ENCODE measurements at regions of chr9 and their contacts with region 1.

Region 1: DNA sequence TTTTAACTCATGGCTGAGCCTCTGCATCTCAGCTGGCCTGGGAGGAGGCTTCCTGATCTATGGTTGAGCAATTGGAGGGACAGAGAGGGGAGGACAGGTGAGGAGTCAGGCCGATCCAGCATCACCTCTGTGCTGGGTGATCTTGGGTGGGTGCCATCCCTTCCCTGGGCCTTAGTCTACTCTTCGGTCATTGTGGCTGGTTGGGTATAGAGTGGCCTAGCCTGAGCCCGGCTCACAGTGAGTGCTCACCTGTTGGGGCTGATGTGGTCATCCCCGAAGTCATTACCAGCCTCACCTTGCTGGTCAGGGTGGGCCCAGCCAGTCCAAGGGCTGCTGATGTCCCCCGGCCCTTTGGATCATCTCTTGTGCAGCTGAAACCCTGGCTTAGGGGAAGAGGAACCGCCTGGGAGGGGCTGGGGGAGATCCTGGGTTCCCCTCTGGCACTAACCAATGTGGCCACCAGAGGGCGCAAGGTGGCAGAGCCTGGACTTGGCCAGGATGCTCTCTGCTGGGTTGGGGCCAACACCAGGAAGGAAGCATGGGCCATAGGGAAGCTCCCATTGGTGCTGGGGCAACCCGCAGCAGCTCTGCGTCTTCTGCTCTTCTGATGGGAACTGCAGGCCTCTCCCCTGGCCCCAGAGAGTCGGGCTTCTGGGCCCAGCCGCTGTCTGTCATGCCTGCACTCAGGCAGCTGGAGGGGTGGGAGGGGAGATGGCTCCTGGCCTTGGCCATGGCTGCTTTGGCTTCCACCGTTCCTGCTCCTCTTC is 17.3 kb upstream of the ODF2 start:
- DNase-seq: peak; percentile 84 to 90
- ATAC-seq: peak; percentile 88 to 96 (median 93)
- H3K4me3 ChIP-seq: no peak overlapping the region
- H3K27ac ChIP-seq: peak overlapping the region in 4 of 10 donors; percentile 1 to 56 (median 20)
- H3K4me1 ChIP-seq: peaks cover 0 to 14% (median 8%) of the 10 kb centered on the region in 9 donors
- H3K27me3 ChIP-seq: no peaks in the 10 kb centered on the region
- CTCF ChIP-seq: peak; percentile 93 to 99 (median 96)

Region 2: DNA sequence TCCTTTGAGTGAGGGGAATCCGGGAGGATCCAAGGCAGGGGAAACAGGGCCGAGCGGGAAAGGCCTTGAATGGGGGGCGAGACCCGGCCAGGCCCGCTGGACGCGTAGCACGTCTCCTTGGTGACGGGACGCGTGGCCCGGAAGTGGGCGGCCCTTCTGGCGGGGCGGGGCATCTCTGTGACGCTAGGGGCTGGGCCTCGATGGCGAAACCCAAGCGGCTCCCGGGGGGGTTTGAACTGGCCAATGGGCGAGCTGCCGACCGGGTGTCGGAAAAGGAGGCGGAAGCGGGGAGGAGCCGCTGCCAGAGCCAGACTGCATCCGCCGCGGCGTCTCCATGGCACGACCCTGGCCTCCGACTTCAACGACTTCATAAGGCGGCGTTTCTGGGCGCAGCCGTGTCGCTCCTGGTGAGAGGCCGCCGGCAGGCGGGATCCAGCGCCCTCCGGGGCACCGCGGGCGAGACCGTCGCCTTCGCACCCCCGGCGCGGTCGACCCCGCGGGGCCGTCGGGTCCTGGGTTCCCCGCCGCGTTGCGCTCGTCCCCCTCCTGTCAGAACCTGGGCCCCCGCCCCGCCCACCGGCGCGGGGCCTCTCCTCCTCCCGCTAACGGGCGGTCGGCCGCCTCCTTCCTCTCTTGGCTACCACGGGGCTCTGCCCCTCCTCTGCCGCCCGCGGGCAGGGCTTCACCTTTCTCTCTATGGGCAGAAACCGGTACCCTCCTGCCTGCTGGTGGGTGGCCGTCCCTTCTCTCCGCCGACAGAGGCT is 17.5 kb after region 1 on chr9 and contains the start of gene ODF2:
- intact Hi-C with region 1: loop called in 2 of 10 experiments (anchors 2 kb)
- DNase-seq: peak; percentile 98 to 99
- ATAC-seq: peak; percentile 93 to 98 (median 96)
- H3K4me3 ChIP-seq: peak within 1 kb of the TSS; percentile 54 to 98 (median 87)
- H3K27ac ChIP-seq: peak within 1 kb of the TSS; percentile 70 to 94 (median 90)
- H3K4me1 ChIP-seq: peaks cover 0 to 33% (median 15%) of the 10 kb centered on the region in 9 donors
- H3K27me3 ChIP-seq: no peaks in the 10 kb centered on the region
- CTCF ChIP-seq: no peak
- total RNA-seq, gene ODF2: 10.9 to 17.1 (median 14.8) TPM